ENCODE measurements at regions of chr6 and their contacts with region 1.

Region 1: DNA sequence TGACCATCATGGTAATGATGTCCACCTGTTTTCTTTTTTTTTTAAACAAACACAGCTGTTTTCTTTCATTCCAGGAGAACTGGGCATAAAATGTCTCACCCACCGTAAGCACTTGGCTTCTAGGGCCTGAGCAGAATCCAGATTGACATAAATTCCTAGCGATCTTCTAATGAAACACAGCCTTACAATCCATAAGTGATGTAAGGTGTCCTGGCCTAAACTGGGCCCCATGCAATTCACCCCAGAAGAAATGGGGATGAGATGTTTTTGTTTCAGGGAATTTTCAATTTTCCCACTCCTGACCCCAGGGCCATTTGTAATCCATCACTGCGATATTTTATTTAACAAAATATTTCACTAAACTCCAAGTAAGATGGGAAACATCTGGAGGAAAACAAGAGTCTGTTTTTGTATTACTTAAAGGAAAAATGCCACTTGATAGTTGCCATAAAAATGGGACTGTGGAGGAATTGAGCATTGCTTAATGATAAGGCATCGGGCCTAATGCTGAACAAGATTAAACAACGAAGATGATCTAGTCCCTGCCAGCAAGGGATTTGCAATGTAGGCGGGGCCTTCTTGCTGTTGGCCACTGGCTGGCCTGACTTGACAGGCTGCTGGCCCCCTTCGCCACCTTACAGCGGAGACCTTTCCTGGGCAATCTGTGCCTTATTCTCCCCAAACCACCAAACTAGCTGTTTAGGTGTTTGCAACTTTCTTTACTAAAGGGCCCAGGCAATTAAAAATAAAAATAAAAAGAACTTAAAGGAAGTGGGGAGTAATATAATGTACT is 183.7 kb downstream of the CD109 start:
- DNase-seq: no peak
- ATAC-seq: no peak
- H3K4me3 ChIP-seq: no peak overlapping the region
- H3K4me3 Mint-ChIP-seq: no peak overlapping the region
- H3K27ac ChIP-seq: no peak overlapping the region
- H3K27ac Mint-ChIP-seq: no peak overlapping the region
- H3K4me1 ChIP-seq: no peaks in the 10 kb centered on the region
- H3K4me1 Mint-ChIP-seq: no peaks in the 10 kb centered on the region
- H3K27me3 ChIP-seq: no peaks in the 10 kb centered on the region
- H3K27me3 Mint-ChIP-seq: peaks cover 0 to 6% (median under 1%) of the 10 kb centered on the region in 5 donors

Region 2: GRCh38 chr6:73893696-73894095 is 14.0 kb after region 1 on chr6:
- CTCF ChIA-PET with region 1: no interaction called
- POLR2A ChIA-PET with region 1: no interaction called
- intact Hi-C with region 1: loop called in 1 of 2 experiments (anchors 1 kb)
- DNase-seq: no peak
- ATAC-seq: no peak
- H3K4me3 ChIP-seq: no peak overlapping the region
- H3K4me3 Mint-ChIP-seq: no peak overlapping the region
- H3K27ac ChIP-seq: no peak overlapping the region
- H3K27ac Mint-ChIP-seq: no peak overlapping the region
- H3K4me1 ChIP-seq: no peaks in the 10 kb centered on the region
- H3K4me1 Mint-ChIP-seq: peaks cover 0 to under 1% (median 0%) of the 10 kb centered on the region in 7 donors
- H3K27me3 ChIP-seq: no peaks in the 10 kb centered on the region
- H3K27me3 Mint-ChIP-seq: peaks cover 0 to 19% (median 4%) of the 10 kb centered on the region in 5 donors

Region 3: GRCh38 chr6:74199215-74199915 is 319.7 kb after region 1 on chr6:
- CTCF ChIA-PET with region 1: no interaction called
- POLR2A ChIA-PET with region 1: no interaction called
- intact Hi-C with region 1: no loop called
- DNase-seq: no peak
- ATAC-seq: no peak
- H3K4me3 ChIP-seq: no peak overlapping the region
- H3K4me3 Mint-ChIP-seq: no peak overlapping the region
- H3K27ac ChIP-seq: no peak overlapping the region
- H3K27ac Mint-ChIP-seq: no peak overlapping the region
- H3K4me1 ChIP-seq: no peaks in the 10 kb centered on the region
- H3K4me1 Mint-ChIP-seq: no peaks in the 10 kb centered on the region
- H3K27me3 ChIP-seq: no peaks in the 10 kb centered on the region
- H3K27me3 Mint-ChIP-seq: no peaks in the 10 kb centered on the region